OCI-LY7 (cell line): ENCODE measurements at regions of chr2 and their contacts with region 1.

Region 1: GRCh38 chr2:33059471-33060156 is 112.9 kb downstream of the LTBP1 start:
- DNase-seq: no peak
- H3K4me3 ChIP-seq: peak overlapping the region; percentile 54
- H3K27ac ChIP-seq: peak overlapping the region; percentile 91
- H3K4me1 ChIP-seq: peaks cover 65% of the 10 kb centered on the region
- CTCF ChIP-seq: no peak

Region 2: DNA sequence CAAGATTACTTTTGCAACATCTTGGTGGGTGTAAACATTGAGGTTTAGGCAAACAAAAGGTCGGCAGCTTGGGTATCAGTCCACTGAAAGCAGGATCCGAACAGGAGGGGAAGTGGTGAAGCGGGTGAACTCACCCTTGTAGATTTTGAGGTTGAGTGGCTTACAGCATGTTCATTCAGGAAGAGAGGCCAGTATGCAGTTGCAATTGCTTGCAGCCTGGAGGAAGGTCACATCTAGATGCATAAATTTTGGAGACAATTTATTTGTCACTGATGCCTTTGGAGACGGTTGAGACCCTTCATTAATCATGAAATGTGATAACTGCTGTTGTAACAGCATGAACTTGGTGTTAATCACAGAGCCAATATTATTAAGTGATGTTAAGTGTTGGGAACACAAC is 18.2 kb after region 1 on chr2:
- CTCF ChIA-PET with region 1: interaction called, 5 read pairs
- POLR2A ChIA-PET with region 1: interaction called, 181 read pairs
- intact Hi-C with region 1: loop called (anchors 1 kb)
- DNase-seq: peak; percentile 89
- H3K4me3 ChIP-seq: peak overlapping the region; percentile 44
- H3K27ac ChIP-seq: peak overlapping the region; percentile 87
- H3K4me1 ChIP-seq: peaks cover 95% of the 10 kb centered on the region
- CTCF ChIP-seq: no peak